HepG2 (cell line): ENCODE measurements at regions of chr20 and their contacts with region 1.

Region 1: DNA sequence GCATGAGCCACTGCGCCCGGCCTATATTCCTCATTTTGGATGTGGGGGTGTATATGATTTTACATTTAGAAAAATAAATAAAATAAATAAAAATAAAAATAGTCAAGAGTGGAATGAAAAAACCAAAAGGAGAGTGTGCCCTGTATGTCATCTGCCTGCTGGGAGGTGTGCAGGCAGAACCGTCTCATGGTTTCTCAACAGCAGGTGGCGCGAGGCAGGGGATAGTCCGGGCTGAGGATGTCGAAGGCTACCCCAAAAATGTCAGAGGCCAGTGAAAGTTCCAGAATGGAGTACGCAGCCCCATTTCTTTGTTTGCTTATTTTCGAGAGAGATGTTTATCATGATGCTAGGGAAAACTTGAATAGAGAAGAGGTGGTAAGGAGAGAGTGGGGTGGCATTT is 16.4 kb upstream of the KIF16B start:
- DNase-seq: no peak
- ATAC-seq: peak; percentile 77
- H3K4me3 ChIP-seq: no peak overlapping the region
- H3K27ac ChIP-seq: no peak overlapping the region
- H3K4me1 ChIP-seq: peaks cover 23% of the 10 kb centered on the region
- H3K27me3 ChIP-seq: no peaks in the 10 kb centered on the region; a peak in 2 of 5 replicates
- CTCF ChIP-seq: peak; percentile 57
- EP300 ChIP-seq: no peak
- POLR2A ChIP-seq: no peak
- RAD21 ChIP-seq: no peak

Region 2: DNA sequence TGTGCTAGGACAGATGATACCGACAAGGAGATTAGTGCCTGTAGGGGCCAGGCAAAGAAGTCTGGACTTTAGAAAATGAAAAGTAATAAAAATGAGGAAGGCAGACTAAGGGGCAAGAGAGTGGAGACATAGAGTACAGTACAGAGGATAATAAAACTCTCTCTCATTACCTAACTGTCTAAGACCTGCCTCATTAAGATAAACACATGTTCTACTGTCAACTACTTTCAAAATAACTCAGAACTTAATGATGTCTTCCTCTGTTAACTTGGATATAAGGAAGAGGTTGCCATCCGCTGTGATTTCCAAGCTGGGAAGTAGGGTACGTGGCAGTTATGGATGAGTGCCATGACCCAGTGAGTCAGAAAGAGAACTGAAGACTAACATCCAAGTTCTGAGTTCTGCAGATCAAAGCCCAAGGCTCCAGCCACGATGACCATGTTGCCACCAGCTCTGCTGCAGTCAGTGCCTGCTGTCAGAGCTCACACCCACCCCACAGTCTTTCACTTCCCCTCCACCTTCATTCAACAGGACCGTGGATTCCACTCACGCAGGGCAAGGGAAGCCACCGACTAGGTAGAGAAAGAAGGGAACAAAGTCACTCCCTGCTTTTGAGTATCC is 98.2 kb before region 1 on chr20:
- CTCF ChIA-PET with region 1: no interaction called
- POLR2A ChIA-PET with region 1: no interaction called
- in situ Hi-C with region 1: no loop called
- intact Hi-C with region 1: no loop called
- DNase-seq: no peak
- ATAC-seq: no peak
- H3K4me3 ChIP-seq: no peak overlapping the region
- H3K27ac ChIP-seq: no peak overlapping the region
- H3K4me1 ChIP-seq: no peaks in the 10 kb centered on the region
- H3K27me3 ChIP-seq: no peaks in the 10 kb centered on the region
- CTCF ChIP-seq: no peak
- EP300 ChIP-seq: no peak
- POLR2A ChIP-seq: no peak
- RAD21 ChIP-seq: no peak

Region 3: DNA sequence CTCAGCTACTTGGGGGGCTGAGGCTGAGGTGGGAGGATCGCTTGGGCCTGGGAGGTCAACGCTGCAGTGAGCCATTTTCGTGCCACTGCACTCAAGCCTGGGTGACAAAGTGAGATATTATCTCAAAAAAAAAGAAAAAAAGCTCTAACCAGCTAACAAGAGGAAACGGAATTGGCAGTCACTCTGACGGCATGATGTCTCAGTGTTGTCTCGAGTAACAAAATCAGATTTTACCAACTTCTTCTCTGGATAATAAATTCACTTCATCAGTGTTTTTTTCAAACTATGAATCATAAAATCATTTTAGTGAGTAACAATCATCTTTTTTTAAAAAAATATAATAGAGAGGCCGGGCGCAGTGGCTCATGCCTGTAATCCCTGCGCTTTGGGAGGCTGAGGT is 29.0 kb before region 1 on chr20:
- CTCF ChIA-PET with region 1: no interaction called
- POLR2A ChIA-PET with region 1: no interaction called
- in situ Hi-C with region 1: no loop called
- intact Hi-C with region 1: loop called (anchors 1 kb)
- DNase-seq: no peak
- ATAC-seq: no peak
- H3K4me3 ChIP-seq: no peak overlapping the region
- H3K27ac ChIP-seq: no peak overlapping the region
- H3K4me1 ChIP-seq: no peaks in the 10 kb centered on the region
- H3K27me3 ChIP-seq: no peaks in the 10 kb centered on the region
- CTCF ChIP-seq: no peak
- EP300 ChIP-seq: no peak
- POLR2A ChIP-seq: no peak
- RAD21 ChIP-seq: no peak